BJ (cell line): ENCODE measurements at regions of chr4 and their contacts with region 1.

Region 1: GRCh38 chr4:8176547-8177399 is 18.2 kb upstream of the ABLIM2 start:
- DNase-seq: no peak
- H3K4me3 ChIP-seq: no peak overlapping the region
- H3K27me3 ChIP-seq: peaks cover 18% of the 10 kb centered on the region
- CTCF ChIP-seq: peak; percentile 94

Region 2: DNA sequence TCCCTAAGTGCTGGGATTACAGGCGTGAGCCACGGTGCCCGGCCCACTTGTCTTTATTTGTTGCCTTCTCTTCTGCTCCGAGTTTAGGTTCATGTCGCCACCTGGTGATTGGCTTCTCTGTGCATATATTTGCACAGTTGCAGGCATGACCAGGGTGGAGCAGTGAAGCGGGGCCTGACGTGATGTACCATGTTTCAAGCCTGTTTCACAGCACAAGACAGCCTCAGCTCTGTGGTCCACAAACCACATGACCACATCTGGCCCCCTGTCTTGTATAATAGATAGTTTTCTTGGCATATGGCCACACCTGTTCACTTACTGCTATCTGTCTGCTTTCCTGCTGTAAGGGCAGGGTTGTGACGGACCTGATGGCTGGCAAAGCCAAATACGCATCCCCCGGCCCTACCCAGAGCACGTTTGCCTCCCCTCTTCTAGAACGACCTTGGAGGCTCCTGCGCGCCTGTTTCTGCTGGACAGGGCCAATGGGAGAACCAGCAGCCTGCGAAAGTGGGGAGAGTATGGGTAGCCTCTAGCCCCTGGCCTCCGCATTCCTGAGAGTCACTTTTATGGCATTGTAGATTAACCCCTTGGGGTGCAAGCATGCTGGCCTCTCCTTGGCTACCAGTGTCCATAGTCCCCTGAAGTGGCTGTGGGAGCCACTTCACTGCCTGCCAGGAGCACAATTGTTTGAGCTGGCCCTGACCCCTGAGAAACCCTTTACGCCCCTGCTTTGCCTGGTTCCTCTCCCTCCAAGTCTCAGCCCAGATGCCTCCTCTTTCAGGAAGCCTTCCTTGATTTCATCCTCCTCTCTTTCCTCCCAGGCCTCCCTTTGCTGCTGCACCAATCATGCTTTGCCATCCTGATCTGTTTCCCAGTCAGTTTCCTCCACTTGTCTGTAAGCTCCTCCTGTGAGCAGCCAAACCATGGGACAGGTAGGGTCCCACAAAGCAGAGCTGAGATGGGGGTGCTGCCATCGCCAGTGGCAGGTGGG is 16.3 kb after region 1 on chr4:
- CTCF ChIA-PET with region 1: interaction called, 23 read pairs
- POLR2A ChIA-PET with region 1: interaction called, 3 read pairs
- DNase-seq: no peak
- H3K4me3 ChIP-seq: no peak overlapping the region
- H3K27me3 ChIP-seq: peaks cover 9% of the 10 kb centered on the region
- CTCF ChIP-seq: peak; percentile 29; the same call in 1 of the 2 replicates

Region 3: GRCh38 chr4:8215001-8215427 is 38.2 kb after region 1 on chr4:
- CTCF ChIA-PET with region 1: interaction called, 17 read pairs
- POLR2A ChIA-PET with region 1: no interaction called
- DNase-seq: peak; percentile 48
- H3K4me3 ChIP-seq: no peak overlapping the region
- H3K27me3 ChIP-seq: no peaks in the 10 kb centered on the region; the same call in 1 of the 2 replicates
- CTCF ChIP-seq: no peak

Region 4: GRCh38 chr4:8241895-8242696 is 65.3 kb after region 1 on chr4:
- CTCF ChIA-PET with region 1: interaction called, 80 read pairs
- POLR2A ChIA-PET with region 1: no interaction called
- DNase-seq: peak; percentile 60
- H3K4me3 ChIP-seq: no peak overlapping the region
- H3K27me3 ChIP-seq: no peaks in the 10 kb centered on the region
- CTCF ChIP-seq: peak; percentile 99

Region 5: DNA sequence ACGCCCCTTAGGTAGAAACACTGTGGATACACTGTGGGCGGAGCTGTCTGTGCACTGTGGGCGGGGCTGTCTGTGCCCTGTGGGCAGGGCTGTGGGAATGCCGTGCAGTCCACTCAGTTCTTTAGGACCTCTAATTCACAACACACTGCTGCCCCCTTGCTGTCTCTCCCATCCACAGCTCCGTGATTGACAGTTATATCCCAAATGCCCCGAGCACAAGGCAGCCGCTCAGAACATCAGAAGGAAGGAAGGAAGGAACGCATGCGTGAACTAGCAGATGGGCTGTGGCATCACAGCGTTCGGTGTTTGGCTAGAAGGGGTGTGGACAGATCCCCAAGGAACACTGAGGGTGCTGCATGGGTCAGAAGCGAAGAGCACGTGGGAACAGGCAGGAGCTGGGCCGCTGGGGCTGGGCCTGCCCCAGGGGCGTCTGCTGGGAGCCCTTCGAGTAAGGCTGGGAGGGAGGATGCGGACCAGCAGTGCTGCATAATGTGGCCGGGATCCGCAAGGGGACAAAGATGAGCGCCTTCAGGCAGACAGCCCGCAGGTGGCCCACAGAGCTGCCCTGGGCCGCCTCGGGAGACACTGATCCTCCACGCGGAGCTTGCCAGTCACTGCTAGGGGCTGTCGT is 234.0 kb after region 1 on chr4:
- CTCF ChIA-PET with region 1: interaction called, 23 read pairs
- POLR2A ChIA-PET with region 1: no interaction called
- DNase-seq: no peak
- H3K4me3 ChIP-seq: no peak overlapping the region
- H3K27me3 ChIP-seq: no peaks in the 10 kb centered on the region
- CTCF ChIP-seq: peak; percentile 24; the same call in 1 of the 2 replicates